ENCODE measurements at regions of chr4 and their contacts with region 1.

Region 1: DNA sequence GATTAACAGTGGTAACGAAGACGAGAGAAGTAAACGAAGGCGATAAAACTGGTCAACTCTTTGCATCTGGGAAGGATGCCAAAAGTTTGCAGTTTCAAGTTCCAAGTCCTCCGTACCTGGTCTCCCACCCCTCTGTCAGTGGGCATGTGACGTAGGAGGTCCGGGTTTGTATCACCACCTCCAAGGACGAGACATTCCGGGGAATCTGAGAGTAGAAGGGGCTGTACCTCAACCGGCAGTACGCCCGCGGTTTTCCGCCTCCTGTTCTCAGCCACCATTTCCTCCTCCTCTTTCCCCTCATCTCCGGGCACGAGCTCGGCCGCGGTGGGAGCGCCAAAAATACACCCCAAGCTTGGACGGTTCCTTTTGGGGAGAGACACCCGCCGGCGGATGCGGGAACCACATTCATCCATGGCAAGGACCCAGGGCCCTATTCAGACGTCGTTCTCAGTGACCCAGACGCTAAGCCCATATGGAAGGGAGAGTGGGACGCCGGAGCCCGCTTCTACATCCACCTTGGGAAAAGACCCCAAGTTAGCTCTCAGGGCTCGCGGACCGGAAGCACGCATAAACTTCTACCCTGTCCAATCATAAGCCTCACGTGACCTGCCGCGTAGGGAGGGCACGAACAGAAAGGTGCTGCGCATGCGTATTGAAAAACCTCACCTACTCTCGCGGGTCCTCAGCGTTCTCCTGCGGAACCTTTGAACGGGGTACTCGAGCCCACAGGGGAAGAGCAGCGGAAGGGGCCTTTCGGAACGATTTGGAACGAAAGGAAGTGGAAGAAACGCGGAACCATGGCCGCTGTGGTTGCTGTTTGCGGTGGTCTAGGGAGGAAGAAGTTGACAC is at the starts of genes HELQ and MRPS18C:
- DNase-seq: peak; percentile 95 to 98 (median 97)
- H3K4me3 ChIP-seq: peak within 1 kb of the TSS; percentile 84
- H3K27ac ChIP-seq: peak within 1 kb of the TSS; percentile 96 to 97
- H3K4me1 ChIP-seq: peaks cover 7% of the 10 kb centered on the region
- H3K27me3 ChIP-seq: no peaks in the 10 kb centered on the region
- CTCF ChIP-seq: peak in 2 of 3 donors; percentile 32 to 40
- EP300 ChIP-seq: no peak
- POLR2A ChIP-seq: peak; percentile 89
- total RNA-seq, gene HELQ: 17.2 to 30.8 (median 22.7) TPM
- total RNA-seq, gene MRPS18C: 13.0 to 47.5 (median 35.7) TPM

Region 2: DNA sequence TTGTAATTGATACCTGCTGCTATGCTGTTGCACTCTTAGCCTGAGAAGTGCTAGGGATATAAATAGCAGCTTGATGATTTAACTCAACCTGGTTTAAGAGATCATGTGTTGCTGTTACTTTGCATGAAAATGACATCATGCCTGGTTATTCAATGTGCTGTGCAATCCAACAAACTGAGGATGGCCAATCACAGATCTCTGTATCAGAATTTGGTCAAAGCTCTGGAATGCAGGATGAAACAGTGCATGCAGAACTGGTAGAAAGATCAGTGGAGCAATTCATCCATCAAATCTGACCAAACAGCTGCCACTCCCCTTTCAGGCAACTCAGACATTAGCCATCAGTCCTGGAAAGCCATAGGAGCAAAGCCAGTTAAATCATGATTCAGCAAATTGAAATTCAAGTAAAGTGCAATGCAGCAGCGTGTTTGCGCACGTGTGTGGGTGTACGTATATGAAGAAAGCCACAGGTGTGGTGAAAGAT is 1823.5 kb before region 1 on chr4:
- intact Hi-C with region 1: no loop called
- DNase-seq: no peak
- H3K4me3 ChIP-seq: no peak overlapping the region
- H3K27ac ChIP-seq: no peak overlapping the region
- H3K4me1 ChIP-seq: no peaks in the 10 kb centered on the region
- H3K27me3 ChIP-seq: no peaks in the 10 kb centered on the region
- CTCF ChIP-seq: no peak
- EP300 ChIP-seq: no peak
- POLR2A ChIP-seq: no peak

Region 3: GRCh38 chr4:82780751-82781231 is 674.7 kb before region 1 on chr4:
- intact Hi-C with region 1: no loop called
- DNase-seq: peak; percentile 86 to 94 (median 90)
- H3K4me3 ChIP-seq: no peak overlapping the region
- H3K27ac ChIP-seq: peak overlapping the region in 1 of 2 donors; percentile 46
- H3K4me1 ChIP-seq: peaks cover 27% of the 10 kb centered on the region
- H3K27me3 ChIP-seq: no peaks in the 10 kb centered on the region
- CTCF ChIP-seq: no peak
- EP300 ChIP-seq: no peak
- POLR2A ChIP-seq: no peak

Region 4: DNA sequence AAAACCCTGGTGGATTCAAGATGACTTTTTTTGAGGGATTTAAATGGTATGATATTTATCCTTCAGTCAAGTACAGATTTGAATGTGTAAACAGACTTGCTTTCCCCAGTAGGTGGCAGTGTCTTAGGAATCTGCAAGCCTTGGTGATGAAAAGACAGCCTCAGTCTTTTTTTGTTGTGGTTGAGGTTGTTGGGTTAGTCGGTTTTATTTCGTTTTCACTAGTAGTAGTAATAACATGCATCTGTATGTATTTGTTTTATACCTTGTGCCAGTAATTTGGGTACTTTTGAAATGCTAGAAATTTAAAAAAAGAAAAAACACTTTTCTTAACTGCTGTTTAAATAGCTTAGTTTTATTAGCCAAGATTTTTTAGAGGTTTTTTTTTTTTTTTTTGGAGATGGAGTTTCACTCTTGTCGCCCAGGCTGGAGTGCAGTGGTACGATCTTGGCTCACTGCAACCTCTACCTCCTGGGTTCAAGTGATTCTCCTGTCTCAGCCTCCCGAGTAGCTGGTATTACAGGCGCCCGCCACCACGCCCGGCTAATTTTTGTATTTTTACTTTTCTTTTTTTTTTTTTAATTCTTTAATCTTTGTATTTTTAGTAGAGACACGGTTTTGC is 381.3 kb before region 1 on chr4:
- intact Hi-C with region 1: no loop called
- DNase-seq: no peak
- H3K4me3 ChIP-seq: no peak overlapping the region
- H3K27ac ChIP-seq: no peak overlapping the region
- H3K4me1 ChIP-seq: no peaks in the 10 kb centered on the region
- H3K27me3 ChIP-seq: no peaks in the 10 kb centered on the region
- CTCF ChIP-seq: peak in 1 of 3 donors; percentile 31
- EP300 ChIP-seq: no peak
- POLR2A ChIP-seq: no peak

Region 5: DNA sequence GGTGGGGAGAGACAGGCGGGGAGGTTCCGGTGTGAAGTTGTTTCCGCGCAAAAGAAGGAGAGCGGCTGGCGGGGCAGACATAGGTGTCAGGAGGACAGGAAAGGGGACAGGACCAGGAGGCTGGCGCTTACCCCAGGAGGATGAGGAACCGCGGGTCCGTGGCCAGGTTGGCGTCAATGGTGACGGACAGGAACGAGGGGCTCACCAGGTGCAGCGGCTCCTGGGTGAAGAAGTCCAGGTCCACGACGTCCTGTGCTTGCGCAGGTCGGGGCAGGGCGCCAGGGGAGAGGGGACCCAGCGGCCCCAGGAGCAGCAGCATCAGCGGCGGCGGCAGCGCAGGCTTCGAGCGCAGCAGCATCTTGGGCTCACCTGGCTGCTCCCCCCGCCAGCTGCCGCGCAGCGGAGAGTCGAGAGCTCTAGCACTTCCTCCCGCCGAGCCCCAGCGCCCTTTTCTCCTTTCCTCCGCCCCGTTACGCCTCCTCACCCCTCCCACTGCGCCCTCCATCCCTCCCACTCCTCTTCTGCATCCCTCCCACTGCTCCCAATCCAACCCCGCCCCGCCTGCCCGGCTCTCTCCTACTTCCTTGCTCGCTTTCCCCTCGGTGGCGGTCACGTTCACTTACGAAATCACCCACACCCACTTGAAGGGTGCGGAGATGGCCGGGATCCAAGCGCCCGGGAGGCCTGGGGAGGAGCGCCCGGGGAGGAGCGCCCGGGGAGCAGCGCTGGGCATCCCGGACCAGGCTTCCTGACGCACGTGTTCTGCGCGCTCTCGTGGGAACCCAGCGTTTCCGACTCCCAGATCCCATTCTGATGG is 120.9 kb before region 1 on chr4 and contains the start of gene HPSE:
- intact Hi-C with region 1: loop called in 1 of 4 experiments (anchors 10 kb)
- DNase-seq: peak; percentile 81 to 87 (median 81)
- H3K4me3 ChIP-seq: peak within 1 kb of the TSS; percentile 58
- H3K27ac ChIP-seq: no peak within 1 kb of the TSS
- H3K4me1 ChIP-seq: peaks cover 9% of the 10 kb centered on the region
- H3K27me3 ChIP-seq: no peaks in the 10 kb centered on the region
- CTCF ChIP-seq: no peak
- EP300 ChIP-seq: no peak
- POLR2A ChIP-seq: no peak
- total RNA-seq, gene HPSE: 4.3 to 23.3 (median 6.4) TPM